Left ventricle myocardium superior (tissue), 1 donor: ENCODE measurements at regions of chr14 and their contacts with region 1.

Region 1: GRCh38 chr14:69259527-69260189 is at the start of gene GALNT16:
- DNase-seq: peak; percentile 74
- ATAC-seq: peak; percentile 44
- total RNA-seq, gene GALNT16: 101 TPM

Region 2: DNA sequence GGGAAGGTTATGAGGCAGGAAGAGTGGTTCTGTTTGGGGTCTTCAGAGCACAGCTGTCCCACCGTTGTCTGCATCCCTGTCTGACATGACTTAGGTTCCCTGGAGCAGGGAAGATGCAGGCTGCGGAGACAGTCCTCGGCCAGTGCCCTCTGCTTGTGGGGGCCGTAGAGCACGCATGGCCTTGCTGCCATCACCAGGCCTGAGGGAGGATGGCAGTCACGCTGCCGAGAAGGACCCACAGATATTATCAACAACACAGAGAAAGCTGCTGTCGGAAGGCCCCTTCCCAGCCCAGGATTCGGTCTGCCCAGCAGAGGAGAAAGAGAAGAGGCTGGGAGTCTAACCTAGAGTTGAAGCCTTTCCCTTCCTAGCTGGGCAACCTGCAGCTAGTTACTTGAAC is 103.4 kb after region 1 on chr14:
- intact Hi-C with region 1: loop called (anchors 10 kb)
- DNase-seq: peak; percentile 59
- ATAC-seq: peak; percentile 90

Region 3: GRCh38 chr14:69408331-69408960 is 148.8 kb after region 1 on chr14:
- intact Hi-C with region 1: no loop called
- DNase-seq: no peak
- ATAC-seq: no peak